HEK293 (cell line): ENCODE measurements at regions of chr11 and their contacts with region 1.

Region 1: DNA sequence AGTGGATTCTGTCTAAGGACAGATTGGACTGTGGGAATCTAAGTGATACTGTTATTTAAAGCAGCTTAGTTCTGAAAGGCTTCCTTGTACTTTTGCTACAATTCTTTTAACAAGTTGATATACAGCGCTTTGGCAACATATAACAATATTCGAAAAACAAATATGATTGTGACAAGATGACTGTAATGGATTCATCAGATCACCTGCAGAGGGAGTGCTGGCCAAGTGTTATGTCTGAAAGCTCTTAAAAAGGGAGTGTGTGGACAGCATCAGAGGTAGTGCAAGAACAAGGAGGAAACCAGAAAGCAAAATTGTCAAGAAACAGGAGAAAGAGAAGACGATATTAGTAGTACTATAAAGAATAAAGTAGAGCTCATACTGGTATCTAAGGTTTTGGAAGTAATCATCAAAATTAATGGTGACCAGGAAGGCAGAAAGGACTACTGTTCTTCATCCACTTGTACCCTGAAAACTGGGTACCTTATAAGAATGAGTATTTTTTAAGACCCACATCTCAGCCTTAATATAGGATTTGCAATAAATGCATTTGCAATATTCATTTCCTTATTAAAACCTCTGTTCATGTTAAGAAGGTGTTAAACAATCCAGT is 1112.0 kb upstream of the CCDC90B start:
- H3K4me3 ChIP-seq: no peak overlapping the region
- H3K27ac ChIP-seq: no peak overlapping the region
- H3K4me1 ChIP-seq: no peaks in the 10 kb centered on the region
- CTCF ChIP-seq: no peak

Region 2: GRCh38 chr11:84061726-84062125 is 336.4 kb before region 1 on chr11:
- CTCF ChIA-PET with region 1: no interaction called
- POLR2A ChIA-PET with region 1: no interaction called
- H3K4me3 ChIP-seq: no peak overlapping the region
- H3K27ac ChIP-seq: no peak overlapping the region
- H3K4me1 ChIP-seq: no peaks in the 10 kb centered on the region
- CTCF ChIP-seq: no peak

Region 3: DNA sequence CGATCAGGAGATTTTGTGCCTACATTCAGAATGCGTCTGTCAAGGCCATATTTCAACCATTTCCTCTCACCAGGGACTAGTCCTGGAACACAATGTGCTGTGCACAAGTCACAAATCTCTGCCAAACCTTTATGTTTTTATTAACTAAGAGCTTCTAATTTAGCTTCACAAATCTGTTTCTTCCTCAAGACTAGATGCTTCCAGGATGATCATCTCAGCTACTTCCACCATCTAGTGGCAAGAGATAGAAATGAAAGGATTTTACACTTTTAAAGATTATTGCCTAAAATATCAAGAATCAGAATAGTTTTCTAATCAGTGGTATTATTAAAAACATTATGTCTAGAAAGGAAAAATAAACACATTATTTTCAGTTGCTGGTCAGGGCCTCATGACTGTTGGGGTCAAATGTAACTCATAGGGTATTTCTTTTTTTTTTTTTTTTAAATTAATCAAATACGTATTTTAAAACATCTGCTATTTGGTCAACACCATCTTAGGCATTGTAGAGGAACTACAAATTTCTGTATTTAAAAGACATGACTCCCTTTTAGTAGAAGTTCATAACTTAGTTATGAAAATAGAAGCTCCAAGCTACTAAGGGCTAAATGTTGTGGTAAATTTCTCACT is 126.4 kb after region 1 on chr11:
- CTCF ChIA-PET with region 1: interaction called, 28 read pairs
- POLR2A ChIA-PET with region 1: no interaction called
- H3K4me3 ChIP-seq: no peak overlapping the region
- H3K27ac ChIP-seq: no peak overlapping the region
- H3K4me1 ChIP-seq: no peaks in the 10 kb centered on the region
- CTCF ChIP-seq: no peak